ENCODE measurements at regions of chr5 and their contacts with region 1.

Region 1: GRCh38 chr5:132490486-132491367 is at the start of gene IRF1:
- DNase-seq: peak; percentile 94 to 99 (median 98)
- ATAC-seq: peak; percentile 71
- H3K4me3 ChIP-seq: peak within 1 kb of the TSS; percentile 98
- H3K4me3 Mint-ChIP-seq: peak within 1 kb of the TSS; percentile 98
- H3K27ac ChIP-seq: peak within 1 kb of the TSS; percentile 98 to 99
- H3K27ac Mint-ChIP-seq: peak within 1 kb of the TSS; percentile 97
- H3K4me1 ChIP-seq: peaks cover 75% of the 10 kb centered on the region
- H3K4me1 Mint-ChIP-seq: peaks cover 83% of the 10 kb centered on the region
- H3K27me3 ChIP-seq: no peaks in the 10 kb centered on the region
- H3K27me3 Mint-ChIP-seq: peaks cover 7% of the 10 kb centered on the region
- CTCF ChIP-seq: no peak
- total RNA-seq, gene IRF1: 1,212 to 1,234 TPM

Region 2: DNA sequence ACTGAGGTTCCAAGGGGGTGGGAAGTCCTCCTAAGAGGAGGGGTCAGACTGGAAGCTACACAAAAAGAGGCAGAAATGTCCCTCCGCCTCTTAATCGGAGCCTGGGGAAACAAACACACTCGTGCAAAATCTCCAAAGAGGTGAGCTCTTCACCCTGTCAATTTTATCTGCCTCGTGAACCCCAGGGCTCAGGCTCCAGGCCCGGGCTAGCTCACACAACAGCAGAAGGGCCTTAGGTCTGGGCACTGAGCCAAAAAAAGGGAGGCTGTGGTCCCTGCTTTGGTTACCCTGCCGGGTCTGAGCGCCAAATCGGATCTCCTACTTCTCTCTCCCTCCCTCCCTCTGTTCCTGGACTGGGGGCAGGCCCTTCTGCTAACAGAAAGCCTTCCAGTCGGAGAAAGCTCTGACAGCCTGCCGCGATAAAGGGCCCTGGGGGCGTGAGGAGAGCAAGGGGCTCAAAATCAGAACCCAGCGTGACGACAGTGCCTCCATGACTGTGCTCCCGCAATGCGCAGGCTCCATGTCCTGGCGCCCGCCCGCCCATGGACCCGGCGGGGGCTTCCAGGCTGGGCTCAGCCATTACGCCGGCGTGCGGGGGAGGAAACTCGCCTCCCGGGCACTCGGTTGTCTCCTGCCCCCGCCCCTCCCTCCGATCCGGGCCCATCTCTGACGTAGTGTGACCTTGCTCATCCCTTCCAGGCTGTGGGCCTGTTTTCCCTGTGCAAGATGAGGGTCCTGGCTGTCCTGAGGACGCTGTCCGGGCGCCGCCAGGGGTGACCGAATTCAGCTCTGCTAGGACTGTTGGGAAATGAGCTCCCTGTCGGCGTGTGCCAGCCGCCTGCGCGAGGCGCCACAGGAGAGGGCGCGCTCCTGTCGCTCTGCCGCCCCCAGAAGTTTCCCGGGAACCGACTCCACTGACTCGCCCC is 197.4 kb before region 1 on chr5:
- CTCF ChIA-PET with region 1: no interaction called
- POLR2A ChIA-PET with region 1: interaction called, 3 read pairs
- intact Hi-C with region 1: loop called in 1 of 2 experiments (anchors 5 kb)
- DNase-seq: peak in 11 of 14 experiments; percentile 14 to 83 (median 49)
- ATAC-seq: peak; percentile 44
- H3K4me3 ChIP-seq: peak overlapping the region; percentile 64
- H3K4me3 Mint-ChIP-seq: peak overlapping the region; percentile 92
- H3K27ac ChIP-seq: no peak overlapping the region
- H3K27ac Mint-ChIP-seq: no peak overlapping the region
- H3K4me1 ChIP-seq: peaks cover 26% of the 10 kb centered on the region
- H3K4me1 Mint-ChIP-seq: peaks cover 10% of the 10 kb centered on the region
- H3K27me3 ChIP-seq: peaks cover 10 to 19% of the 10 kb centered on the region in 2 experiments
- H3K27me3 Mint-ChIP-seq: peaks cover 35% of the 10 kb centered on the region
- CTCF ChIP-seq: no peak

Region 3: GRCh38 chr5:132394667-132395259 is 96.0 kb before region 1 on chr5:
- CTCF ChIA-PET with region 1: interaction called, 104 read pairs
- POLR2A ChIA-PET with region 1: interaction called, 94 read pairs
- intact Hi-C with region 1: no loop called
- DNase-seq: no peak
- ATAC-seq: no peak
- H3K4me3 ChIP-seq: no peak overlapping the region
- H3K4me3 Mint-ChIP-seq: no peak overlapping the region
- H3K27ac ChIP-seq: no peak overlapping the region
- H3K27ac Mint-ChIP-seq: peak overlapping the region; percentile 84
- H3K4me1 ChIP-seq: peaks cover 60% of the 10 kb centered on the region
- H3K4me1 Mint-ChIP-seq: peaks cover 76% of the 10 kb centered on the region
- H3K27me3 ChIP-seq: no peaks in the 10 kb centered on the region
- H3K27me3 Mint-ChIP-seq: no peaks in the 10 kb centered on the region
- CTCF ChIP-seq: no peak

Region 4: DNA sequence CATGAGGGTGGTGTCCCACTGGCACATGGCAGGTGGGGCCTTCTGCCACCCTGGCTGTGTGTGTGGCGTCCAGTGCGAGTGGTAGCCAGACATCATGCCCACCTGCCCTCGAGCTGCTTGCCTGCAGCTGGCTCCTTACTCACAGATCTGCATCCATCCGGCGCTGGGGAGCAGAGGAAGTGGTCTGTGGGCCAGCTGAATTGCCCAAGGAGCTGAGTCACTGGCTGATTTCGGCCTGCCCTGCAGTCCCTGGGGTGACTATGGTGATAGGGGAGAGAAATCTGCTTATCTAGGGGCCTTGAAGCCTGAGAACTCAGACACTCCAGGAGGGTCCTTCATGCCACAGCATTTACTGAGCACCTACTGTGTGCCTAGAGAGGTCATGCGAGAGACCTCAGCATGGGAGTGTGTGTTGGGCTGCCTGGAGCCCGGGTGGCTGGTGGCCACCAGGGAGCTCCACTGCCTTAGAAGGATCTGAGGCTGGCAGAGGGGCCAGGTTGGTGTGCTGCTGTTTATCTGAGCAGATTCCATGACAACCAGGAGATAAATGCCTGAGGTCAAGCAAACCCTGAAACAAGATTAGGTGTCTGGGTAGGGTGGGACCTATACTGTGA is 64.1 kb before region 1 on chr5:
- CTCF ChIA-PET with region 1: interaction called, 12 read pairs
- POLR2A ChIA-PET with region 1: interaction called, 645 read pairs
- intact Hi-C with region 1: loop called in 1 of 2 experiments (anchors 2 kb)
- DNase-seq: peak; percentile 20 to 88 (median 52)
- ATAC-seq: peak; percentile 32
- H3K4me3 ChIP-seq: peak overlapping the region; percentile 13
- H3K4me3 Mint-ChIP-seq: peak overlapping the region; percentile 77
- H3K27ac ChIP-seq: peak overlapping the region; percentile 78 to 85
- H3K27ac Mint-ChIP-seq: peak overlapping the region; percentile 93
- H3K4me1 ChIP-seq: peaks cover 99% of the 10 kb centered on the region
- H3K4me1 Mint-ChIP-seq: peaks cover 97% of the 10 kb centered on the region
- H3K27me3 ChIP-seq: no peaks in the 10 kb centered on the region
- H3K27me3 Mint-ChIP-seq: no peaks in the 10 kb centered on the region
- CTCF ChIP-seq: no peak

Region 5: GRCh38 chr5:132466433-132467286 is 24.1 kb before region 1 on chr5:
- CTCF ChIA-PET with region 1: interaction called, 30 read pairs
- POLR2A ChIA-PET with region 1: interaction called, 1,045 read pairs
- intact Hi-C with region 1: no loop called
- DNase-seq: peak in 13 of 14 experiments; percentile 56 to 90 (median 66)
- ATAC-seq: peak; percentile 63
- H3K4me3 ChIP-seq: peak overlapping the region; percentile 34
- H3K4me3 Mint-ChIP-seq: peak overlapping the region; percentile 85
- H3K27ac ChIP-seq: peak overlapping the region; percentile 69 to 73
- H3K27ac Mint-ChIP-seq: peak overlapping the region; percentile 97
- H3K4me1 ChIP-seq: peaks cover 88% of the 10 kb centered on the region
- H3K4me1 Mint-ChIP-seq: peaks cover 99% of the 10 kb centered on the region
- H3K27me3 ChIP-seq: no peaks in the 10 kb centered on the region
- H3K27me3 Mint-ChIP-seq: no peaks in the 10 kb centered on the region
- CTCF ChIP-seq: no peak

Region 6: DNA sequence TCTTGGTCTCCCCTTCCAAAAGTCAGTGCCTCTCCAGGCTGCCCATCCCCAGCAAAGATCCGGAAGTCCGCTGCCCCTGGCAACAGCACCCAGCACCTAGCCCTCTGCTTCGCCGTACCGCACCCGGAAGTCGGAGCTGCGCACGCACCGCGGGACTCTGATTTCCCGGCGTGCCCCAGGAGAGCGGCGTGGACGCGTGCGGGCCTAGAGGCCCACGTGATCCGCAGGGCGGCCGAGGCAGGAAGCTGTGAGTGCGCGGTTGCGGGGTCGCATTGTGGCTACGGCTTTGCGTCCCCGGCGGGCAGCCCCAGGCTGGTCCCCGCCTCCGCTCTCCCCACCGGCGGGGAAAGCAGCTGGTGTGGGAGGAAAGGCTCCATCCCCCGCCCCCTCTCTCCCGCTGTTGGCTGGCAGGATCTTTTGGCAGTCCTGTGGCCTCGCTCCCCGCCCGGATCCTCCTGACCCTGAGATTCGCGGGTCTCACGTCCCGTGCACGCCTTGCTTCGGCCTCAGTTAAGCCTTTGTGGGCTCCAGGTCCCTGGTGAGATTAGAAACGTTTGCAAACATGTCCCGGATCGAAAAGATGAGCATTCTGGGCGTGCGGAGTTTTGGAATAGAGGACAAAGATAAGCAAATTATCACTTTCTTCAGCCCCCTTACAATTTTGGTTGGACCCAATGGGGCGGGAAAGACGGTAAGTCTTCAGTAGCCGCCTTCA is 66.2 kb after region 1 on chr5 and contains the start of gene RAD50:
- CTCF ChIA-PET with region 1: no interaction called
- POLR2A ChIA-PET with region 1: interaction called, 24 read pairs
- intact Hi-C with region 1: no loop called
- DNase-seq: peak; percentile 79 to 96 (median 88)
- ATAC-seq: peak; percentile 94
- H3K4me3 ChIP-seq: peak within 1 kb of the TSS; percentile 83
- H3K4me3 Mint-ChIP-seq: peak within 1 kb of the TSS; percentile 95
- H3K27ac ChIP-seq: peak within 1 kb of the TSS; percentile 76 to 78
- H3K27ac Mint-ChIP-seq: peak within 1 kb of the TSS; percentile 98
- H3K4me1 ChIP-seq: peaks cover 22% of the 10 kb centered on the region
- H3K4me1 Mint-ChIP-seq: peaks cover 43% of the 10 kb centered on the region
- H3K27me3 ChIP-seq: no peaks in the 10 kb centered on the region
- H3K27me3 Mint-ChIP-seq: no peaks in the 10 kb centered on the region
- CTCF ChIP-seq: no peak
- total RNA-seq, gene RAD50: 12.7 to 13.4 TPM

Measured in CD4-positive, alpha-beta T cell (primary cell).